ENCODE measurements at regions of chr19 and their contacts with region 1.

Region 1: DNA sequence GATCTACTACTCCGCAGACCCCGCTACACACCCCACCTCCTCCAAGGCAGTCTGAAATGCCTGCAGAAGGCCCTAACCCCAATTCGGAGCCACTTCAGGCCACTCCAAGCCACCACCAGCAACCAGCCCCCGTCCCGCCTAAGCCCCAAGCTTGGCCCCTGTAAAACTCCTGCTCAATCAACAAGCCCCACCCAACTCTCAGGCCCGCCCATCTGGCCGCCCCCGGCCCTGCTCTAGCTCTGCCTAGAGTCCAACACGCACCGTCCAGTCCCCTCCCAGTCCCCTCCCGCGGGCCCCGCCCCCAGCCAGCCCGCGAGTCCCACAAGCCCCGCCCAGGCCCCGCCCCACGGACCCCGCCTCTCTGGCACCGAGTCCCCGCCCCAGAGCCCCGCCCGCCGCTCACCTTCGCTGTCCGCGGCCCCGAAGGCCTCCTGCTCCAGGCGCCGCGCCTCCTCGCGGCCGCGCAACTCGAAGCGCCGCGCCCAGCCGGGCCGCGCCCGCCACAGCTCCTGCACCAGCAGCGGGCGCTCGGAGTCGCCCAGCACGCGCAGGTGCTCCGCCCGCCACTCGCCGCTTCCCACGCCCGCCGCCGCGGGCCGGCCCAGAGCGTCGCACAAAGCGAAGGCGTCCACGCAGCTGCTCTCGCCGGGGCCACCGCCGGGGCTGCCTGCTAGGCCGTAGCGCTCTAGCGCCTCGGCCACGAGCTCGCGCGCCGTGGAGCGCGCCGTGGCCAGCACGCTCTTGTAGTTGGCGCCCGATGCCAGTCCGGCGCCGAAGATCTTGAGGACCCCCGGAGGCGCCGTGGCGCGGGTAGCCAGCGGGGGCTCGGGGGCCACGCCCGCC is 1.6 kb downstream of the RASIP1 start:
- H3K4me3 ChIP-seq: peak overlapping the region; percentile 36
- H3K27ac ChIP-seq: peak overlapping the region; percentile 77; the same call in 1 of the 2 replicates
- H3K4me1 ChIP-seq: peaks cover 5% of the 10 kb centered on the region
- CTCF ChIP-seq: no peak

Region 2: DNA sequence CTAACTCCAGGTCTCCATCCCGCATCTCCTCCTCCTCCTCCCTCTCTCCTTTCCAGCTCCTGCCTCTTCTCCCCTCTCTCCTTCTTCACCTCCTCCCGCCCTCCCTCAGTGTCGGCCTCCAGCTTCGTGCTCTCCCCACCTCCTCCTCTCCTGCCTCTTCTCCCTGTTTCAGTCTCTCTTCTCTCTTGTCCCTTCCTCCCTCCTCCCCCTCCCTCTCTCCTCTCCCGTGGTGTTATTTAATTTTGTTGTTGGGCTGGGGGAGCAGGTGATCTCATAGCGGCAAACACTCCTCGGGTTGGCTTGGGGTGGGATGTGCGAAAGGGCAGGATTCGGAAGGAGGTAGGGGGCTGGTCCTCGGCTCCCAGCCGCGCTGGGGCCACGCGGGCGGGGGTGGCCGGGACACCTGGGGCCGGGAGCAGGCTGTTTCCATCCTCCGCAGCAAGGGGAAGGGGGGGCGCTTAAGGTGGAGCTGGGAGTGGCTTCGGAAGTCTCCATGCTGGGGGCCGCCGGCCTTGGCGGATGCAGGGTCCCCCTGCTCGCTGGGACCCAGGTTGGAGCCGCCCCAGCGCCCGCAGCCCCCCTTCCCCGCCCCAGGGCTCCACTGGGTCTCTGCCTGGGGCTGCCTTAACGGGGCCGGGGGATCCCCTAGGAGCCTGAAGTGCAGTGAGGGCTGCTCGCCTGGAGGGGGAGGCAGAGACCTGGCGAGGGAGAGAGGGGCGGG is 92.6 kb before region 1 on chr19 and contains the start of gene CA11:
- CTCF ChIA-PET with region 1: interaction called, 11 read pairs
- POLR2A ChIA-PET with region 1: interaction called, 10 read pairs
- H3K4me3 ChIP-seq: peak within 1 kb of the TSS; percentile 44
- H3K27ac ChIP-seq: peak within 1 kb of the TSS; percentile 70
- H3K4me1 ChIP-seq: peaks cover 9% of the 10 kb centered on the region
- CTCF ChIP-seq: peak; percentile 96

Region 3: GRCh38 chr19:48713864-48714758 is 24.7 kb before region 1 on chr19:
- CTCF ChIA-PET with region 1: interaction called, 11 read pairs
- POLR2A ChIA-PET with region 1: interaction called, 9 read pairs
- H3K4me3 ChIP-seq: peak overlapping the region; percentile 67
- H3K27ac ChIP-seq: peak overlapping the region; percentile 67
- H3K4me1 ChIP-seq: peaks cover 13% of the 10 kb centered on the region
- CTCF ChIP-seq: no peak

Region 4: GRCh38 chr19:48720613-48721296 is 18.0 kb before region 1 on chr19:
- CTCF ChIA-PET with region 1: interaction called, 3 read pairs
- POLR2A ChIA-PET with region 1: interaction called, 35 read pairs
- H3K4me3 ChIP-seq: peak overlapping the region; percentile 74
- H3K27ac ChIP-seq: peak overlapping the region; percentile 75
- H3K4me1 ChIP-seq: no peaks in the 10 kb centered on the region; the same call in 1 of the 2 replicates
- CTCF ChIP-seq: no peak

Region 5: DNA sequence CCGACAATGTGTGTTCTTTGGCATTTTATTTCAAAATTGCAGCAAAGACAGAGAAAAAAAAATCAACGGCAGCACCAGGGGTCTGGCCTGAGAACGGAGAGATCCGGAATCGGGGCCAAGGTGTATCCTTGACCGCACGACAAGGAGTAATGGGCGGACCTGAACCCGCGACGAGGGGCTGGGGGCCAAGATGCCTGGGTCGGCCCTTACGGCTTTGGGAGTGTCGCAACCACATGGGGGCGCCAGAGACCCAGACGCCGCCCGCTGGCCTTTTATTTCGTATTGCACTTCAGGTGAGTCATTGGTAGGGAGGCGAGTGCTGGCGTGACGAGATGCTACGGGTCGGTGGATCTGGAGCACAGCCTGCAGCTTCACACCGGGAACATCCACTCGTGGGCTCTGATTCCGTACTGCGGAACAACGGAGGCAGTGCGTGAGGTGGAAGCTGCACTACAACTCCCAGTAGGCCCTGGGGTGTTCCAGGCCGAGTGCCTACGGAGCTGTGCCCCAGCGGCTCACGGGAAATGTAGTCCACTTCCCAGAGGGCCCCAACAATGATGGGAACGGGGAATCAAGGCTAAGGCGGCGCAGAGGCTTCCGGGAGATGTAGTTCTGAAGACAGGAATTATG is 56.4 kb after region 1 on chr19:
- CTCF ChIA-PET with region 1: no interaction called
- POLR2A ChIA-PET with region 1: no interaction called
- H3K4me3 ChIP-seq: peak overlapping the region; percentile 54
- H3K27ac ChIP-seq: no peak overlapping the region; the same call in 1 of the 2 replicates
- H3K4me1 ChIP-seq: no peaks in the 10 kb centered on the region
- CTCF ChIP-seq: peak; percentile 99

Measured in HEK293 (cell line).